H1 (cell line): ENCODE measurements at regions of chr2 and their contacts with region 1.

Region 1: GRCh38 chr2:62297624-62298010 is 101.7 kb downstream of the B3GNT2 start:
- DNase-seq: no peak
- H3K4me3 ChIP-seq: no peak overlapping the region
- H3K27ac ChIP-seq: no peak overlapping the region
- H3K4me1 ChIP-seq: peaks cover 0 to 15% (median 5%) of the 10 kb centered on the region in 4 experiments; a peak in 4 of 7 replicates
- H3K27me3 ChIP-seq: no peaks in the 10 kb centered on the region; a peak in 1 of 7 replicates
- CTCF ChIP-seq: peak; percentile 57 to 69 (median 58)
- EP300 ChIP-seq: no peak
- POLR2A ChIP-seq: no peak
- RAD21 ChIP-seq: peak; percentile 74 to 82

Region 2: GRCh38 chr2:62309465-62310091 is 12.0 kb after region 1 on chr2:
- CTCF ChIA-PET with region 1: interaction called, 25 read pairs
- POLR2A ChIA-PET with region 1: interaction called, 4 read pairs
- DNase-seq: no peak
- H3K4me3 ChIP-seq: no peak overlapping the region
- H3K27ac ChIP-seq: no peak overlapping the region
- H3K4me1 ChIP-seq: peaks cover 12 to 29% (median 23%) of the 10 kb centered on the region in 4 experiments
- H3K27me3 ChIP-seq: no peaks in the 10 kb centered on the region
- CTCF ChIP-seq: no peak
- EP300 ChIP-seq: no peak
- POLR2A ChIP-seq: no peak
- RAD21 ChIP-seq: no peak

Region 3: DNA sequence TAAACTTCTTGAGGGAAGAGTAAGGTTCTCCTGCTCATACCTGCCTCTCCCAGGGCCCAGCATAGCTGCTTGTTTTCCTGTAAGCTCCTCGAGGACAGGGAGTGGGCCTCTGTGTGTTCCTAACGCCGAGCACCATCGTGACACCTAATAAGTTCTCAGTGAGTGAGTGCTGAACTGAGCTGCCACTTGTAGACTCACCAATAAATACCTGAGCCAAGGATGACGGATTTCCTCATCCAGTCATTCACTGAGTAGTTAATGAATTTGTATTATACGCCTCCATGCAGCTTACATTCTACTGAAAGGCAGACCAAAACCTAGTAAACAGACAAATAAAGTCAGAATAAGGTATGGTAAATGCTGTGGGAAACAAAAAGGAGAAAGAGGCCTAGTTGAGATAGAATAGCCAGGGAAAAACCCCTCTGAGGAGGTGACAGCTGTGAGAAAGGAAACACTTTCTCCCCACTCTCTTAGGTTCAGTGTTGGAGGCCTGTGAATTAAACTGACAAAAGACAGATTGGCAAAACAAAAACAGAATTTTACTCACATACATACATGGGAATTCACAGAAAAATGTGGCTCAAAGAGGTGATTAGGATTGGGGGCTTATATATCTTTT is 36.9 kb after region 1 on chr2:
- CTCF ChIA-PET with region 1: interaction called, 11 read pairs
- POLR2A ChIA-PET with region 1: no interaction called
- DNase-seq: no peak
- H3K4me3 ChIP-seq: no peak overlapping the region
- H3K27ac ChIP-seq: no peak overlapping the region
- H3K4me1 ChIP-seq: peaks cover 4 to 14% (median 5%) of the 10 kb centered on the region in 4 experiments; a peak in 6 of 7 replicates
- H3K27me3 ChIP-seq: no peaks in the 10 kb centered on the region
- CTCF ChIP-seq: no peak
- EP300 ChIP-seq: no peak
- POLR2A ChIP-seq: no peak
- RAD21 ChIP-seq: no peak

Region 4: DNA sequence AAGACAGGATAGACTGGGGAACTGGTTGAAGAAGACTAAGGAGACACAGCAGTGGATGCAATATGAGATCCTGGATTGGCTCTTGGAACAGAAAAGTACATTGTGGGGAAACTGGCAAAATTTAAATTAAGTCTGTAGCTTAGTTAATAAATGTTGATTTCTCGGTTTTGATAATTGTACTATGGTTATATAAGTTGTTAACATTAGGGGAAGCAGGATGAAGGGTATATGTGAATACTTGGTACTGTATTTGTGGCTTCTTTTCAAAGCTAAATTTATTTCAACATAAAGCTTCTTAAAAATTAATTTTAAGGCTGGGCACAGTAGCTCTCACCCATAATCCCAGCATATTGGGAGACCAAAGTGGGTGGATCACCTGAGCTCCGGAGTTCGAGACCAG is 104.5 kb after region 1 on chr2:
- CTCF ChIA-PET with region 1: interaction called, 10 read pairs
- POLR2A ChIA-PET with region 1: no interaction called
- DNase-seq: no peak
- H3K4me3 ChIP-seq: no peak overlapping the region
- H3K27ac ChIP-seq: no peak overlapping the region
- H3K4me1 ChIP-seq: peaks cover 0 to 4% (median 0%) of the 10 kb centered on the region in 4 experiments; a peak in 1 of 7 replicates
- H3K27me3 ChIP-seq: no peaks in the 10 kb centered on the region
- CTCF ChIP-seq: no peak
- EP300 ChIP-seq: no peak
- POLR2A ChIP-seq: no peak
- RAD21 ChIP-seq: no peak

Region 5: DNA sequence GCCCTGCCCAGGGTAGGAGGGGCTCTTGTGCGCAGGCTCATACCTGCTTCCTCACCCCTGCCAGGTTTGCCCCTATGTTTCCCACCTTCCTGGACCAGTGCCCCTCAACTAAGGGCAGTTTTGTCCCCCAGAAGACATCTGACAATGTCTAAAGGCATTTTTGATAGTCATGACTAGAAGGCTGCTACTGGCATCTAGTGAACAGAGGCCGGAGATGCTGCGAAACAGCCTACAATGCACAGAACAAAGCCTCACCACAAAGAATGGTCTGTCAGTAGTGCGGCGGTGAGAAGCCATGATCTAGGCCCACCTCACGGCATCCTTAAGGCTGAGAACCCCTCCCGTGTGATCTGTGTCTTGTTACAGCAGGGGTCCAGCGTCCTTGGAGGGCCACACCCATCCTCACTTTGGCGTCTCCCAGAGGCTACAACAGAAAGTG is 112.4 kb after region 1 on chr2:
- CTCF ChIA-PET with region 1: interaction called, 20 read pairs
- POLR2A ChIA-PET with region 1: no interaction called
- DNase-seq: no peak
- H3K4me3 ChIP-seq: no peak overlapping the region
- H3K27ac ChIP-seq: no peak overlapping the region
- H3K4me1 ChIP-seq: peaks cover 7 to 12% (median 9%) of the 10 kb centered on the region in 4 experiments; a peak in 6 of 7 replicates
- H3K27me3 ChIP-seq: no peaks in the 10 kb centered on the region
- CTCF ChIP-seq: peak in 2 of 3 experiments; percentile 16 to 28; a peak in 2 of 4 replicates
- EP300 ChIP-seq: no peak
- POLR2A ChIP-seq: no peak
- RAD21 ChIP-seq: peak; percentile 55 to 69